ENCODE measurements at regions of chr12 and their contacts with region 1.

Region 1: DNA sequence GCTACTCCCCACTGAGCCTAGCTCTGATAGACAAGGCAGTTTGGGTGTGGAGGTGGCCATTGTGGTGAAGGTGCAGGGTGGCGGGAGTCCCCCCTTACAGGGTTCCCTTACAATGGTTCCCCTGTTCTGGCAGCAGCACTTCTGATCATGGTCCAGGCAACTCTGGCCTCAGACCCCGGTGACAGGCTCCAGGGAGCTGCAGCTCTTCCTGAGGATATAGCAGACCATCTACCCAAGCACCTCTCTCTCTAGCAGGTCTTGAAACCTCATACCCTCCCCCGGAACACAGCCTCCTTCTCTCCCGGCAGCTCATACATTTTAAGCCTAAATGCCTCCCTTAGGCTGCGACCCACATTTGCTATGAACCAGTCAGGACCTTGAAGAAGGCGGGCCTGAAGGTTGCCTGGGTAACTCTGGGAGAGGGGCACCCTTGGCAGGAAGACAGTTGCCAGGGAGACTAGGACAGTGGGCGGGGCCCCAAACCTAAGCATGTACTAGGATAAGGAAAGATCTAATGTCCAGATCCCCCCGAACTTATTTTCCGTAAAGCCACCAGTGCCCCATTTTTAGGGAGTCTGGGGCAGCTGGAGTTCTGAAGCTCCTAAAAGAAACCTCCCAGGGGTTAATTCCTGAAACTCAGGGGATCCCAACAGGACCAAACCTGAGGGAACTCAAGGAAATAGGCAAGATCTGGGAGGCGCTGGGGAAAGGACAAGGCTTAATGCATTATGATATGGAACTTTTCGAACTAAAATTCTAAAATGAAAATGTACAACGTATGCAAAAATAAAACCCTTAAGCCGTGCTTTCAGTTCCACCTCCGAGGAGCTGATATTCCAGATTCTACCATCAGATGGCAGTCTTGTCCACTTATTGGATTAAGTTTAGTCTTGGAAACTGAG is 4.5 kb upstream of the GDF11 start:
- DNase-seq: peak; percentile 92
- ATAC-seq: peak; percentile 88
- H3K4me3 Mint-ChIP-seq: peak overlapping the region; percentile 72
- H3K27ac Mint-ChIP-seq: peak overlapping the region; percentile 92
- H3K4me1 Mint-ChIP-seq: peaks cover 25% of the 10 kb centered on the region
- H3K27me3 Mint-ChIP-seq: no peaks in the 10 kb centered on the region
- CTCF ChIP-seq: peak; percentile 93

Region 2: DNA sequence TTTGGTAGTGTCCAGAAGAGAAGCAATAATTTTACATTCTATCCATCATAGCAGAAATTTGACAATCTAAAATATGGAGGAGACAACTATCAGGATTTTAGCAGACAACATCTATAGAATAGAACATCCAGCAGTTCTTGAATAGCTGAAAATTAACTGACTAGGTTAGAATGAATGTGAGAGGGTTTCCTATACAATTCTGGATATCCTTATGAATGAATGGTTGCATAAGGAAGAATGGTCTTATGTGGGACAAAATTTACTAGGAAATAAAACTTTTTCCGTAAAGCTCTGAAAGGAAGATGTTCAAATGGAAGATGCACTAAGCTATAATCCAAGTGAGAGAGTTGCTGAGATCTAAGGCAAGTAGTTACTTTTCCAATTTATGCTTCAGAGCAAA is 407.9 kb before region 1 on chr12 and contains the start of gene OR6C3:
- CTCF ChIA-PET with region 1: no interaction called
- POLR2A ChIA-PET with region 1: no interaction called
- intact Hi-C with region 1: no loop called
- DNase-seq: no peak
- ATAC-seq: no peak
- H3K4me3 Mint-ChIP-seq: no peak within 1 kb of the TSS
- H3K27ac Mint-ChIP-seq: no peak within 1 kb of the TSS
- H3K4me1 Mint-ChIP-seq: no peaks in the 10 kb centered on the region
- H3K27me3 Mint-ChIP-seq: peaks cover 11% of the 10 kb centered on the region
- CTCF ChIP-seq: no peak
- total RNA-seq, gene OR6C3: not detected

Region 3: GRCh38 chr12:55757701-55758100 is 19.3 kb after region 1 on chr12:
- CTCF ChIA-PET with region 1: interaction called, 66 read pairs
- POLR2A ChIA-PET with region 1: interaction called, 6 read pairs
- intact Hi-C with region 1: no loop called
- DNase-seq: no peak
- ATAC-seq: no peak
- H3K4me3 Mint-ChIP-seq: no peak overlapping the region
- H3K27ac Mint-ChIP-seq: peak overlapping the region; percentile 25
- H3K4me1 Mint-ChIP-seq: peaks cover 19% of the 10 kb centered on the region
- H3K27me3 Mint-ChIP-seq: no peaks in the 10 kb centered on the region
- CTCF ChIP-seq: no peak

Region 4: DNA sequence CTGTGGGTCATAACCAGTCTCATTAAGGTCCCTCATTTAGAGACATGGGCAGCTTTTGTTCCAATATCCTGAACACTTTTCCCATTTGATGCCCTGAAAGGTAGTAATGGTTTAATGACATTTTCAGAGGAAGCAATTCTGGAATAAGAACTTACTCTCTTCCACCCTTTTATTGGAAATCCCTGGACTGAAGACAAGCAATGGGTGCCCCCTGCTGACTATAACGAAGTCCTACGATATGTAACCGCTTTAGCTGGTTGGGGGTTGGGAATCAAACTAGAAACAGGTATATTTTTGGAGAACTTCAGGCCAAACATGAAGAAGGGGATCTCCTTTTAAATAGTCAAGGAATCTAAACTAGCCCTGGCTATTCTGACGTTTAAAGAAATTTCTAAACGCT is 58.7 kb after region 1 on chr12:
- CTCF ChIA-PET with region 1: interaction called, 66 read pairs
- POLR2A ChIA-PET with region 1: interaction called, 5 read pairs
- intact Hi-C with region 1: no loop called
- DNase-seq: peak; percentile 25
- ATAC-seq: no peak
- H3K4me3 Mint-ChIP-seq: no peak overlapping the region
- H3K27ac Mint-ChIP-seq: no peak overlapping the region
- H3K4me1 Mint-ChIP-seq: peaks cover 17% of the 10 kb centered on the region
- H3K27me3 Mint-ChIP-seq: no peaks in the 10 kb centered on the region
- CTCF ChIP-seq: peak; percentile 34

Region 5: DNA sequence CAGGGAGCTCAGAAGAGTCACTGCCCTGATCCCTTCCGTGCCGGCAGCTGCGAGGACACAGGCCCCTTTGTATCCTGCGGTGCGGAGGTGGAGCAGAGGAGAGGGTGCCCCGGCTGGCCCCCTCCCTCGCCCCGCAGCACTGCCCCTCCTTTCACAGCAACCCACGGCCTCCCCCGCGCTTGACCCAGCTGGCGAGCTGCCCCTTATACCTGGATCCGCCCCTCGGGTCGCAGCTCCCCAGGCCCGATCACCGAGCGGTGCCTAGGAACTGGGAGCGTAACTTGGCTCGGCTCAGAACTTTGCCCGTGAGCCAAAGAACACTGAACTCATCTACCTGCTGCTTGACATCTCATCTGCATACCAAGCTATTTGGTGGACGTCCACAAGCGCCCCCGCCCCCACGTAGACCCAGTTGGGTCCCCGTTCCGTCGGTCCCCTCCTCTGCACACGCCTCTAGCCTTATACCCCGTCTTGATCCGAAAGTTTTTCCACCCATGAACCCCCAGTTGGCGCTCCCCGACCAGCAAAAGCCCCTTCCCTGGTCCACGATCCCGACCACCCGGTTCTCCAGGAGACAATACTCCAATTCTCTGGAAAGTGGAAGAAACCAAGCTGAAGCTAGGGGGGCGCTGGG is 91.7 kb after region 1 on chr12:
- CTCF ChIA-PET with region 1: interaction called, 16 read pairs
- POLR2A ChIA-PET with region 1: interaction called, 3 read pairs
- intact Hi-C with region 1: no loop called
- DNase-seq: peak; percentile 61
- ATAC-seq: peak; percentile 26
- H3K4me3 Mint-ChIP-seq: peak overlapping the region; percentile 97
- H3K27ac Mint-ChIP-seq: peak overlapping the region; percentile 93
- H3K4me1 Mint-ChIP-seq: peaks cover 44% of the 10 kb centered on the region
- H3K27me3 Mint-ChIP-seq: no peaks in the 10 kb centered on the region
- CTCF ChIP-seq: no peak

Region 6: GRCh38 chr12:55915482-55915859 is 177.1 kb after region 1 on chr12:
- CTCF ChIA-PET with region 1: no interaction called
- POLR2A ChIA-PET with region 1: no interaction called
- intact Hi-C with region 1: no loop called
- DNase-seq: no peak
- ATAC-seq: no peak
- H3K4me3 Mint-ChIP-seq: no peak overlapping the region
- H3K27ac Mint-ChIP-seq: peak overlapping the region; percentile 59
- H3K4me1 Mint-ChIP-seq: peaks cover 33% of the 10 kb centered on the region
- H3K27me3 Mint-ChIP-seq: no peaks in the 10 kb centered on the region
- CTCF ChIP-seq: no peak

Region 7: GRCh38 chr12:55940065-55940732 is 201.8 kb after region 1 on chr12:
- CTCF ChIA-PET with region 1: interaction called, 31 read pairs
- POLR2A ChIA-PET with region 1: interaction called, 4 read pairs
- intact Hi-C with region 1: no loop called
- DNase-seq: peak; percentile 90
- ATAC-seq: peak; percentile 86
- H3K4me3 Mint-ChIP-seq: peak overlapping the region; percentile 22
- H3K27ac Mint-ChIP-seq: peak overlapping the region; percentile 99
- H3K4me1 Mint-ChIP-seq: peaks cover 80% of the 10 kb centered on the region
- H3K27me3 Mint-ChIP-seq: no peaks in the 10 kb centered on the region
- CTCF ChIP-seq: peak; percentile 84

Region 8: DNA sequence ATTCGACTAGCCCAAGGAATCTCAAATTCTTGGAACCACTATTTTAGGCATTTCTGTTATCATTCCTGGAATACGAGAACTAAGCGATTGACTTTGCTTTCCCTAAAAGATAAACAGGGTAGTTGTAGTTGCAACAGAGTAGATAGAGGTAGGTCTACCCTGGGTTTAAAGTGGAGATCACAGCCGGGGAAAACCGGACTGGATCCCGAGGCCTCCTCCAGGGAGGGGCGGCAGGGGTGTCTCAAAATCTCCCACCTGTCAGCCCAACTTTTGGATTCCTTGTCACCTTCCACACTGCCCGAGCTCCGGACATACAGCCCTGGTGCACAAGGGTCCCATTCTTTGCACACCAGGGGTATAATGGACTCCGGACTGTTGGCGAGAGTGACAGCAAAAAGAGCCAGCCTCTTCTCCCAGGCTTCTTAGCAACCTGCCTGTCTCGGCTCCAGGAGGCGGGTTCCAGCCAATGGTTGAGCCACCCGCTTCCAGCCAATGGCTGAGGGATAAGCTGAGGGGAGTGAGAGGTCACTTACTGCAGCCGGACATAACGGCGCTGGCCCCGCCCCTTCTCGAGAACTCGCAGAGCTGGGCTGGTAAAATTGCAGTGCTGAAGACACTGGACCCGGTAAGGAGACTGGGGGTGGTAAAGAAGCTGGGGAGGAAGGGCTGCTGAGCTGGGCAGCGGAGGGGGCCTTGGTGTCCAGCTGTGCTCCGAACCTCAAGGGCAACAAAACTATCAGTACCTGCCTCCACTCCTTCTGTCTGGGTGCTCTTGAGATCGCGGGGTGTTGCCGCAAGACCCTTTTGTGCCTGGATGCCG is 258.6 kb after region 1 on chr12 and contains the start of gene SUOX:
- CTCF ChIA-PET with region 1: interaction called, 18 read pairs
- POLR2A ChIA-PET with region 1: no interaction called
- intact Hi-C with region 1: no loop called
- DNase-seq: peak; percentile 65
- ATAC-seq: peak; percentile 88
- H3K4me3 Mint-ChIP-seq: peak within 1 kb of the TSS; percentile 74
- H3K27ac Mint-ChIP-seq: peak within 1 kb of the TSS; percentile 51
- H3K4me1 Mint-ChIP-seq: peaks cover 24% of the 10 kb centered on the region
- H3K27me3 Mint-ChIP-seq: peaks cover 11% of the 10 kb centered on the region
- CTCF ChIP-seq: no peak
- total RNA-seq, gene SUOX: 4.6 to 6.2 TPM

Region 9: GRCh38 chr12:56189176-56189917 is 451.0 kb after region 1 on chr12 and contains the start of gene SMARCC2:
- CTCF ChIA-PET with region 1: interaction called, 14 read pairs
- POLR2A ChIA-PET with region 1: no interaction called
- intact Hi-C with region 1: no loop called
- DNase-seq: peak; percentile 91
- ATAC-seq: peak; percentile 84
- H3K4me3 Mint-ChIP-seq: peak within 1 kb of the TSS; percentile 92
- H3K27ac Mint-ChIP-seq: peak within 1 kb of the TSS; percentile 98
- H3K4me1 Mint-ChIP-seq: peaks cover 40% of the 10 kb centered on the region
- H3K27me3 Mint-ChIP-seq: peaks cover 2% of the 10 kb centered on the region
- CTCF ChIP-seq: peak; percentile 76
- total RNA-seq, gene SMARCC2: 79.3 to 87.9 TPM

Measured in activated CD8-positive, alpha-beta T cell treated with anti-CD3 and anti-CD28 coated beads for 36 hours (primary cell).